ENCODE measurements at regions of chr20 and their contacts with region 1.

Region 1: DNA sequence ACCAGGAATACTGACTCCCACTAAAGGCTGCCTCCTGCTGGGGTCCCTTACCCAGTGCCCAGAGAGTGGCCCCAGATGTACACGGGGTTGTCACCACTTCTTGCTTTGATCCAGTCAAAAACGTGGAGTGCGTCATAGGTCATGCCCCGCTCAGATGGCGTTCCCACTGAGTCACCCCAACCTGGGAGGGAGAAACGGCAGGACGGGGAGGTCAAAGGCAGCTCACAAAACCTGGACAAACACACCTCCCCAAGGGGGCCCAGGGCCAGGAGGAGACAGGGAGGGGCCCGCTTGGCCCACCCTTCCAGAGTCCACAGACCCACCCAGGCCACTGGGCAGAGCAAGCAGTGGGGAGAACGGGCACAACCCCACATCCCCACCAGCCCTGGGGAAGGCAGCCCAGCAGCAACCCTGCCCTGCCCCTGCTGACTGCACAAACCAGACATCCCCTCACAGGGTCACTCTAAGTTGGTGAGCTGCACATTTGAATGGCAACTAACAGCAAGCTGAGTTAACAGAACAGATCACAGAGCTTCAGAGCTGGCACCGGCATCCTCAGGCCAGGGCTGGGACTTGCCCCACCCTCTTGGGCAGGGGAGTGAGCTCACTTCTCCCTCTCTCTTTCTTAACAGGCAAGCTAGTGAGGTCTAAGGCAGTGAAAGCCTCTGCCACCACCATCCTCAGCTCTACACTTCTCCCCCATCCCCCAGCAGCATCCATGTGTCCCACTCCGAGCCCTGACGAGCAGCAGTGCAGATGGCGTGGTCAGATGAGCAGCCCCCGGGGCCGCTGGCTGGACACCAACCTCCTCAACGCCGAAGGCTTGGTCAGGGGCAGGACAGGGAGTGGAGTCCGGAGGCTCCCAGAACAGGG is 61.7 kb downstream of the PYGB start:
- DNase-seq: peak; percentile 78 to 81
- ATAC-seq: peak; percentile 39
- H3K4me3 ChIP-seq: no peak overlapping the region
- H3K27ac ChIP-seq: peak overlapping the region in 1 of 2 donors; percentile 9
- H3K4me1 ChIP-seq: peaks cover 3% of the 10 kb centered on the region in 2 donors
- H3K27me3 ChIP-seq: no peaks in the 10 kb centered on the region

Region 2: DNA sequence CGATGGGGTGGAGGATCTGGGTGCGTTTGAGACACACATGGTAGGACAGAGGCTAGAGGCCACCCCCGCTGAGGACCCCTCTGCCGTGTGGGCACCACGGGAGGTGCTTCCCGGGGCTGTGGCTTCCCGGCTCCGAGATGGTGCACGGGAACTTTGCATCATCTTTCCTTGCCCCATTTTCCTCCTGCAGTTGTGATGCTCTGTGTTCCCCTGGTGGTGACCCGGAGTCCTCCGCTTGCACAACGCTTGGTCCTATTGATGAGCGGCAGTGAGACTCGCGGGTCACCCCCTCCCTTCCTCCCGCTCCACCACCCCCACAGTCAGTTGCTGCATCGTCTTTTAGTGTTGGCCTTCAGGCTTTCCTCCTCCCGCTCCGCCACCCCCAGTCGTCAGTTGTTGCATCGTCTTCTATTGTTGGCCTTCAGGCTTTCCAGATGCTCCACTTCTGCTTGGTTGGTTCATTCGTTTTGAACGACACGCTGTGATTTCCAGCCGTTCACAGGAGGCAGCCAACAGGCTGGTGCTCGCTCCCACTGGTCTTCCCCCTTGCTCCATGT is 24.5 kb before region 1 on chr20:
- intact Hi-C with region 1: loop called in 1 of 2 experiments (anchors 2 kb)
- DNase-seq: peak; percentile 43 to 58
- ATAC-seq: no peak
- H3K4me3 ChIP-seq: no peak overlapping the region
- H3K27ac ChIP-seq: no peak overlapping the region
- H3K4me1 ChIP-seq: no peaks in the 10 kb centered on the region
- H3K27me3 ChIP-seq: no peaks in the 10 kb centered on the region

Region 3: GRCh38 chr20:25510202-25510601 is 200.6 kb after region 1 on chr20:
- intact Hi-C with region 1: no loop called
- DNase-seq: no peak
- ATAC-seq: no peak
- H3K4me3 ChIP-seq: no peak overlapping the region
- H3K27ac ChIP-seq: no peak overlapping the region
- H3K4me1 ChIP-seq: no peaks in the 10 kb centered on the region
- H3K27me3 ChIP-seq: no peaks in the 10 kb centered on the region

Measured in aorta (tissue), 5 donors.